HepG2 (cell line): ENCODE measurements at regions of chr10 and their contacts with region 1.

Region 1: DNA sequence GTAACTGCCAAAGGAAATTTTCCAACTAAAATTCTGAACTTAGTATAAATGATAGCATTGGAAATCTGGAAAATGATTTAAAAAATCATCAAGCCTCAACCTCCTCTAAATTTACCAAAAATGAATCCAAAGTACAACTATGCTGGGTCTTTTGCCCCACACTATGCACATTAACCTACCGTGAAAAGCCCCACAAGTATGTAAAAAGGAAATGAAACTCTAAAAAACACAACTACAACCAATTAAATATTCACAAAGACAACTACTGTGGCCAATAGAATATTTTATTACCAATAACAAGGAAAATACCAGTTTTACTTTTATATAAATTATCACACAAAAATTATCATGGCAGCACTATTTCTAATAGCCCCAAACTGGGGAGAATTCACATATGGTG is 19.3 kb downstream of the EIF3A start:
- DNase-seq: no peak
- ATAC-seq: no peak
- H3K4me3 ChIP-seq: no peak overlapping the region
- H3K27ac ChIP-seq: no peak overlapping the region
- H3K4me1 ChIP-seq: no peaks in the 10 kb centered on the region
- H3K27me3 ChIP-seq: no peaks in the 10 kb centered on the region
- CTCF ChIP-seq: no peak
- EP300 ChIP-seq: no peak
- POLR2A ChIP-seq: no peak
- RAD21 ChIP-seq: no peak

Region 2: DNA sequence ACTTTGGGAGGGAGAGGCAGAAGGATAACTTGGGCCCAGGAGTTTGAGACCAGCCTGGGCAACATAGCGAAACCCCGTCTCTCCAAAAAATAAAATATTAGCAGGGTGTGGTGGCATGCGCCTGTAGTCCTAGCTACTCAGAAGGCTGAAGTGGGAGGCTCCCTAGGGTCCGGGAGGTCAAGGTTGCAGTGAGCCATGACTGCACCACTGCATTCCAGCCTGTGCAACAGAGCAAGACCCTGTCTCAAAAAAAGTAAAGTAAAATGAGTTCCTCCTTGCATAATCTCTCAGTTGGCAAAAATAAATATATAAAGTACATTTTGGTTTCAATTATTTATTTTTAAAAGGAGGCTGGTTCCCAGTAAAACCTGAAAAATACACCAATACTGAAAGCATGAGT is 20.0 kb before region 1 on chr10:
- CTCF ChIA-PET with region 1: no interaction called
- POLR2A ChIA-PET with region 1: no interaction called
- in situ Hi-C with region 1: no loop called
- intact Hi-C with region 1: loop called (anchors 2 kb)
- DNase-seq: no peak
- ATAC-seq: peak; percentile 51
- H3K4me3 ChIP-seq: no peak overlapping the region
- H3K27ac ChIP-seq: no peak overlapping the region
- H3K4me1 ChIP-seq: 0 out of 2 replicates have a peak, but pooled peaks cover 6% of the 10 kb centered on the region
- H3K27me3 ChIP-seq: no peaks in the 10 kb centered on the region
- CTCF ChIP-seq: no peak
- EP300 ChIP-seq: no peak
- POLR2A ChIP-seq: no peak
- RAD21 ChIP-seq: no peak